HEK293 (cell line): ENCODE measurements at regions of chr17 and their contacts with region 1.

Region 1: GRCh38 chr17:12256380-12256995 is 235.8 kb downstream of the MAP2K4 start:
- H3K4me3 ChIP-seq: no peak overlapping the region
- H3K27ac ChIP-seq: no peak overlapping the region
- H3K4me1 ChIP-seq: no peaks in the 10 kb centered on the region
- CTCF ChIP-seq: peak; percentile 25; the same call in 1 of the 2 replicates

Region 2: GRCh38 chr17:12342609-12343435 is 86.3 kb after region 1 on chr17:
- CTCF ChIA-PET with region 1: interaction called, 10 read pairs
- POLR2A ChIA-PET with region 1: no interaction called
- H3K4me3 ChIP-seq: no peak overlapping the region
- H3K27ac ChIP-seq: no peak overlapping the region
- H3K4me1 ChIP-seq: no peaks in the 10 kb centered on the region
- CTCF ChIP-seq: no peak